OCI-LY7 (cell line): ENCODE measurements at regions of chr17 and their contacts with region 1.

Region 1: GRCh38 chr17:82871056-82871903 is 31.5 kb upstream of the ZNF750 start:
- DNase-seq: peak; percentile 99
- H3K4me3 ChIP-seq: peak overlapping the region; percentile 51
- H3K27ac ChIP-seq: peak overlapping the region; percentile 95
- H3K4me1 ChIP-seq: peaks cover 76% of the 10 kb centered on the region
- CTCF ChIP-seq: peak; percentile 83

Region 2: DNA sequence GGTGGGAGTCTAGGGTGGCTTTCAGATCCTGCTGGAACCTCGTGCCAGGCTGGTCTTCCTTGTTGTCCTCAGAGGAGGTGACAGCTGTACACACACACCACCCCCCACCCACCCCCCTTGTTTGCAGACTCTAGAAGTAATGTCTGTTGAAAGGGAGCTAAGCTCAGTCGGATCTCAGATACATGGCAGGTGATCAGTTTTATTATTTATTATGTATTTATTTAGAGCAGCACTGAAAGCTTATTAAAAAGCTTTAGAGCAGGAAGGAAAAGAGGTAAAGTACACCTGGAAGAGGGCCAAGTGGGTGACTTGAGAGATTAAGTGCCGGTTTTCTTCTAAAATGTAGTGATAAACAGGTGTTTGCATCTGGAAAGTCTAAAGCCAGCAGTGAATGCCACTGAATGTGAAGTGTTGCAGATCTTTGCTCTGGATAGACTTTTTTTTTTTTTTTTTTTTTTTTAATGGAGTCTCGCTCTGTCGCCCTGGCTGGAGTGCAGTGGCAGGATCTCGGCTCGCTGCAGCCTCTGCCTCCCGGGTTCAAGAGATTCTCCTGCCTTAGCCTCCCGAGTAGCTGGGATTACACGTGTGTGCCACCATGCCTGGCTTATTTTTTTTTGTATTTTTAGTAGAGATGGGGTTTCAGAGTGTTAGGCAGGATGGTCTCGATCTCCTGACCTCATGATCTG is 311.6 kb before region 1 on chr17:
- CTCF ChIA-PET with region 1: no interaction called
- POLR2A ChIA-PET with region 1: no interaction called
- intact Hi-C with region 1: no loop called
- DNase-seq: no peak
- H3K4me3 ChIP-seq: no peak overlapping the region
- H3K27ac ChIP-seq: no peak overlapping the region
- H3K4me1 ChIP-seq: peaks cover 7% of the 10 kb centered on the region
- CTCF ChIP-seq: no peak

Region 3: DNA sequence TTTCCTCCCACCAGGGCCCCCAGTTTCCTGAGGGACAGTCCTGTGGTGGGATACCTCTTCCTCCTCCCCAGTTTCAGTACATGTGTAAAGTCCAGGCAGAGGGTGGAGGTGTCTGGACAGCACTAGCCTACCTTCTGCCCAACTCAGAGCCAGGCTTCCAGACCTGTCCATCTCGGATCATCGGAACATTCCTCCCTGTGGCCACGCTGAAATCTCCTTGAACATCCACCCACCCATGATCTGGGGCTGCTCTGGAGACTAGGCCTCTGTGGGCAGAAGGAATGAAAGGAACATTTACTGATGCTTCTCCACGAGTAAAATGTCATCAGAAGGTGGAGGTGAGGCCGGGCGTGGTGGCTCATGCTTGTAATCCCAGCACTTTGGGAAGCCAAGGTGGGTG is 170.3 kb before region 1 on chr17:
- CTCF ChIA-PET with region 1: no interaction called
- POLR2A ChIA-PET with region 1: no interaction called
- intact Hi-C with region 1: no loop called
- DNase-seq: no peak
- H3K4me3 ChIP-seq: no peak overlapping the region
- H3K27ac ChIP-seq: no peak overlapping the region
- H3K4me1 ChIP-seq: peaks cover 7% of the 10 kb centered on the region
- CTCF ChIP-seq: no peak

Region 4: DNA sequence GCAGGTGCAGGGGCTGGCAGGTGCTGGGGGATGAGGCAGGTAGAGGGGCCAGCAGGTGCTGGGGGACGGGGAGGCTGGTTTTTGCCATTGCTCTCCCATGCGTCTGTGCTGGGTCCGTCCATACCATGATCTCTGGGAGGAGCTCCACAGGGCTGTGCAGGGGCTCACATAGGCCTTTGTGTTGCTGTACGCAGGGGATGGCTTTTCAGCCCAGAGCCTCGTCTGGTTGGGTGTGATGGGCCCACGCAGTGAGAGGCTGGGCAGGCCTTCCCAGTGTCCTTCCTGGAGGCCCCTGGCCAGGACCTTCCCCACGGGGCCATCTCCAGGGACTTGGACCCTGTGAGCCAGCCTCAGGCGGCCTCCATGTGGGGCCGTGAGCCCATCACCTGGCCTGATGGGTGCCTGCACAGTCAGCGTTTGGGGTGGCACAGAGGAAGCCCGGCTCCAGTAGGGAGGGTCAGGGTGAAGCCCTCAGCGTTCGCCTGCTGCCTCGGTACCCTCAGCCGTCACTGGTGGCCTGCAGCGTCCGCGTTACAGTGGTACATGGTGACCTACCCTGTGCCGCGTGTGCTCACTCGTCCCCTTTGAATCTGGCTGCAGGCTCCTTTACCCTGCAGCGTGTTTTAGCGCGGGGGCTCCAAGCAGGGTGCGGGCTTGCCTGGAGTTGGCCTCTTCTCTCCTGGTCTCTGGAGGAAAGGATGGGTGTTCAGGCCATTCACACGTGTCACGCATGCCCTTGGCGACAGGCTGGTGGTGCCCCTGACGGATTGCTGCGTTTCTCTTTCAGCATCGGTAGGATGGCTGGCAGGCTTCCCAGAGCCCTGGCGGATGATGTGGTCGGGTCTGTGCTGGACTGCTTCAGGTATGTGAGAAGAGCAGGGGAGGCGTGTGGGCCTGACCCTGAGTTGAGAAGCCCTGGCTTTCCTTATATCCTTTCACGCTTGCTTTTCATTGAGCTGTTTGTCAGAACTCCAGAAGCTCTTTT is 62.1 kb before region 1 on chr17:
- CTCF ChIA-PET with region 1: no interaction called
- POLR2A ChIA-PET with region 1: no interaction called
- intact Hi-C with region 1: no loop called
- DNase-seq: no peak
- H3K4me3 ChIP-seq: no peak overlapping the region
- H3K27ac ChIP-seq: no peak overlapping the region
- H3K4me1 ChIP-seq: no peaks in the 10 kb centered on the region
- CTCF ChIP-seq: no peak

Region 5: GRCh38 chr17:82884970-82885353 is 13.7 kb after region 1 on chr17:
- CTCF ChIA-PET with region 1: interaction called, 16 read pairs
- POLR2A ChIA-PET with region 1: interaction called, 19 read pairs
- intact Hi-C with region 1: loop called (anchors 1 kb)
- DNase-seq: peak; percentile 82
- H3K4me3 ChIP-seq: no peak overlapping the region
- H3K27ac ChIP-seq: peak overlapping the region; percentile 71
- H3K4me1 ChIP-seq: peaks cover 24% of the 10 kb centered on the region
- CTCF ChIP-seq: no peak

Region 6: GRCh38 chr17:82974136-82974952 is 103.1 kb after region 1 on chr17:
- CTCF ChIA-PET with region 1: no interaction called
- POLR2A ChIA-PET with region 1: no interaction called
- intact Hi-C with region 1: loop called (anchors 1 kb)
- DNase-seq: no peak
- H3K4me3 ChIP-seq: no peak overlapping the region
- H3K27ac ChIP-seq: no peak overlapping the region
- H3K4me1 ChIP-seq: peaks cover 40% of the 10 kb centered on the region
- CTCF ChIP-seq: no peak

Region 7: GRCh38 chr17:83051395-83052233 is 180.3 kb after region 1 on chr17:
- CTCF ChIA-PET with region 1: no interaction called
- POLR2A ChIA-PET with region 1: no interaction called
- intact Hi-C with region 1: loop called (anchors 2 kb)
- DNase-seq: peak; percentile 99
- H3K4me3 ChIP-seq: peak overlapping the region; percentile 74
- H3K27ac ChIP-seq: peak overlapping the region; percentile 75
- H3K4me1 ChIP-seq: peaks cover 31% of the 10 kb centered on the region
- CTCF ChIP-seq: no peak